Testis (tissue), 5 donors: ENCODE measurements at regions of chr12 and their contacts with region 1.

Region 1: DNA sequence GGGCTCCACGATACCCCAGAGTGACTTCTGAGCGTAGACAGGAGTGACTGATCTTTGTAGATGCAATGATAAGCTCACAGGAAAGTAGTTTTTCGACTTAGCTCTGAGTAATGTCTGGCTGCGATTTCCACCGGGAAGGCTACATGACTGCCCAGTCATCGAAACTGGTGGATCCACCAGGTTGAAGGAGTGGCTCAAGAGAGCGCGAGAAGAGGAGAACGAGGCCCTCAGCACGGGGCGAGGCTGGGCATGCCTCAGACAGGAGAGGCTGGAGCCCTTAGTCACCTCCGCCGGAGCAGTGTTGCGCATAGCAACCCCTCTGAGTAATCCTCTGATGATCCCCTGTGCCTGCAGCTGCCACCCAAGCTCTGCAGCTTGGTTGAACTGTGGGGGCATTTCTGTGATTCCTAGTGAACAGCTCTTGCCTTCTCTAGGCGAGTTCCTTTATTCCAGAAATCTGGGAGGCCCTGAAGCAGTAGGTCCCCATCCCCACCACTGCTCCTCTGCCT is 25.6 kb downstream of the ELK3 start:
- DNase-seq: no peak
- H3K4me3 ChIP-seq: no peak overlapping the region
- H3K27ac ChIP-seq: no peak overlapping the region
- H3K4me1 ChIP-seq: peaks cover 5% of the 10 kb centered on the region
- H3K27me3 ChIP-seq: no peaks in the 10 kb centered on the region
- CTCF ChIP-seq: no peak
- POLR2A ChIP-seq: no peak

Region 2: DNA sequence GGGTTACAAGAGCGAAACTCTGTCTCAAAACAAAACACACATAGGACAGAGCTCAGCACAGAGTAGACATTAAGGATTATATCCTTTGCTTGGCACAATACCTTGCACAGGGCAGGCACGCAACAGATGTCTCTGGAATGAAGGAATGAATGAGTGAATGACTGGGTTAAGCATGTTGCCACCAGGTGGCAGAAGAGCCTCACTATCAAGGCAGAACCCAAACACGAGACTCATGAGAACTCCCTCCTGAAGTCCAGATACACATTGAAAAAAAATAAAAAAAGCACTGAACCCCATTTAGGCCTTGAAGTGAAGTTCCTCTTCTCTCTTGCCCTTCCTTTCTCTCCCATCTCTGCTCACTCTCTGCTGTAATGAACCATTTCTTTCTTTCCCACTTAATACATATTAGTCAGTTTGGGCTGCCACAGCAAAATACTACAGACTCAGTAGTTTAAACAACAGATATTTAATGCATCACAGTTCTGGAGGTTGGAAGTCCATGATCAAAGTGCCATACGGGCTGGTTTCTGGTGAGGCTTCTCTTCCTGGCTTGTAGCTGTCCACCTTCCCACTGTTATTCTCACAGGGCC is 157.8 kb before region 1 on chr12:
- intact Hi-C with region 1: loop called (anchors 10 kb)
- DNase-seq: peak; percentile 83
- H3K4me3 ChIP-seq: no peak overlapping the region
- H3K27ac ChIP-seq: no peak overlapping the region
- H3K4me1 ChIP-seq: no peaks in the 10 kb centered on the region
- H3K27me3 ChIP-seq: no peaks in the 10 kb centered on the region
- CTCF ChIP-seq: peak; percentile 75 to 79 (median 75)
- POLR2A ChIP-seq: no peak

Region 3: DNA sequence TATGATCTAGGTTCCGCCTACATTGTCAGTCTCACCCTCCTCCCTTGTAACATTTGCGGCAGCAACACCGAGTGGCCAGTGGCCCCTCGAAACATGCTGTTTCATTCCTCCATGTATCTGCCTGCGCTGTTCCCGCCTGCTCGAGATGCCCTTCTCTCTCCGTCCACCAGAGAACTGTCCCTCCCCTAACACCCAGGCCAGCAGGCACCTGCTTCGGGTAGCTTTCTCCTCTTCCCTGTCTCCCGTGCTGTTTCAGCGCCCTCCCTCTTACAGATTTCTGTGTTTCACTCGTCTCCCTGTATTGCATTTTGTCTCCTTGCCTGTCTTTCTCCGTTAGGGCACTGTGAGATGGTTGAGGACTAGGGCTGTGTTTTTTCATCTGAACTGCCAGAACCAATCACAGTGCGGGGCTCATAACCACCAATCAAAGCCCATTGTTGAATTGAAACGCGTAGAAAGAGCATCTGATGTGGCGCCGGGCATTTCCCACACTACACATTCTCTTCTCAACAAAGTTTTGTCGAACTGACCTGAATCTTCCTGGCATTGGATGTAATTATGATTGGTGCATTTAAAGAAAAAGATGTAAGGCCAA is 66.5 kb before region 1 on chr12:
- intact Hi-C with region 1: no loop called
- DNase-seq: peak; percentile 30
- H3K4me3 ChIP-seq: peak overlapping the region in 1 of 2 donors; percentile 0
- H3K27ac ChIP-seq: no peak overlapping the region
- H3K4me1 ChIP-seq: no peaks in the 10 kb centered on the region
- H3K27me3 ChIP-seq: no peaks in the 10 kb centered on the region
- CTCF ChIP-seq: no peak
- POLR2A ChIP-seq: no peak

Region 4: DNA sequence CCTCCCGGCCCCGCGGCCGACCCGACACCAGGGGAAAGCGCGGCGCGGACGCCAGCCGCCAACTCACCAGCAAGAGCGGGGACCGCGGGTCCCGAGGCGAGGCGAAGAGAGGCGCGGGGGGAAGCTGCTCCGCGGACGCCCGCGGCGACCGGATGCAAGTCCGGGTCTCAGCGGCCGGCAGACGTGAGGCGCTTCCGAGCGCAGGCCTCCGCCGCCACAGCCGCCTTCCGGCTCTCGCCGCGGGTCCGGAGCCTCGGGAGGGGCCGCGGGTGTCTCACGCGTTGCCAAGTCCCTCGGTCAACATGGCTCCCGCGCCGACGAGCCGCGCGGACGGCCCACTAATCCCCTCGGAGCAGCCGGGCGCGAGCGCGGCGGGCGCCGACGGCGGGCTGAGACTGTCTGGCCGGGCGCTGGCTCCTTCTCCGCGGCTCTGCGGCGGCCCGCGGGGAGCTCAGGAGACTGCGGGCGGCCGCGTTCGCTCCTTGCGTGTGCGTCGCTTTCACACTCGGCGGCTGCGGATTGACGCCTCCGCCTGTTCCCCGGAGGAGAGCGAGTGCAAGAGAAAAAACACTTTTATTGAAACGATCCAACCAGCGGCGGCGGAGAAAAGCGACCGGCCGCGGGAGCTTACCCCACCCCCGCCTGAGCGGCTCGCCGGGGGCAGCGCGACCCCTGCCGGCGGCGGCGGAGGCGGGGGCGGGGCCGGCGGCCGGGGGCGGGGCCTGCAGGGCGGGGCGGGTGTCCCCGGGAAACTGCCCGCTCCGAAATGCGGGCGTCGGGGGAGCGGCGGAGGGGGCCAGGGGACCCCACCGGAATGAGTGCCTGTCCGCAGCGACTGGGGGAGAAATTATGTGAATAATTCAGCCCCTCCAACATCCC is 180.4 kb after region 1 on chr12 and contains the start of gene CDK17:
- intact Hi-C with region 1: loop called (anchors 10 kb)
- DNase-seq: peak; percentile 78
- H3K4me3 ChIP-seq: peak within 1 kb of the TSS; percentile 93 to 95
- H3K27ac ChIP-seq: peak within 1 kb of the TSS; percentile 94 to 97
- H3K4me1 ChIP-seq: peaks cover 12% of the 10 kb centered on the region
- H3K27me3 ChIP-seq: no peaks in the 10 kb centered on the region
- CTCF ChIP-seq: peak; percentile 30 to 49 (median 43)
- POLR2A ChIP-seq: no peak
- total RNA-seq, gene CDK17: 91.5 to 100.0 TPM